ENCODE measurements at regions of chr9 and their contacts with region 1.

Region 1: GRCh38 chr9:35116898-35117551 is 1.4 kb upstream of the ATOSB start:
- DNase-seq: peak; percentile 94
- H3K4me3 Mint-ChIP-seq: peak overlapping the region; percentile 89
- H3K27ac Mint-ChIP-seq: peak overlapping the region; percentile 80
- H3K4me1 Mint-ChIP-seq: peaks cover 38% of the 10 kb centered on the region
- H3K27me3 Mint-ChIP-seq: no peaks in the 10 kb centered on the region

Region 2: GRCh38 chr9:34376596-34377403 is 740.2 kb before region 1 on chr9 and contains the start of gene MYORG:
- CTCF ChIA-PET with region 1: no interaction called
- intact Hi-C with region 1: loop called (anchors 1 kb)
- DNase-seq: peak; percentile 97
- H3K4me3 Mint-ChIP-seq: peak within 1 kb of the TSS; percentile 80
- H3K27ac Mint-ChIP-seq: no peak within 1 kb of the TSS
- H3K4me1 Mint-ChIP-seq: peaks cover 30% of the 10 kb centered on the region
- H3K27me3 Mint-ChIP-seq: no peaks in the 10 kb centered on the region
- total RNA-seq, gene MYORG: 1.1 to 2.0 TPM

Region 3: GRCh38 chr9:35161713-35162604 is 44.9 kb after region 1 on chr9 and contains the start of gene UNC13B:
- CTCF ChIA-PET with region 1: interaction called, 4 read pairs
- intact Hi-C with region 1: loop called (anchors 1 kb)
- DNase-seq: peak; percentile 83
- H3K4me3 Mint-ChIP-seq: peak within 1 kb of the TSS; percentile 88
- H3K27ac Mint-ChIP-seq: no peak within 1 kb of the TSS
- H3K4me1 Mint-ChIP-seq: peaks cover 25% of the 10 kb centered on the region
- H3K27me3 Mint-ChIP-seq: peaks cover 3% of the 10 kb centered on the region
- total RNA-seq, gene UNC13B: 5.4 to 6.4 TPM

Region 4: GRCh38 chr9:35415386-35416096 is 298.5 kb after region 1 on chr9:
- CTCF ChIA-PET with region 1: no interaction called
- intact Hi-C with region 1: loop called (anchors 2 kb)
- DNase-seq: no peak
- H3K4me3 Mint-ChIP-seq: no peak overlapping the region
- H3K27ac Mint-ChIP-seq: no peak overlapping the region
- H3K4me1 Mint-ChIP-seq: no peaks in the 10 kb centered on the region
- H3K27me3 Mint-ChIP-seq: peaks cover 9% of the 10 kb centered on the region

Region 5: DNA sequence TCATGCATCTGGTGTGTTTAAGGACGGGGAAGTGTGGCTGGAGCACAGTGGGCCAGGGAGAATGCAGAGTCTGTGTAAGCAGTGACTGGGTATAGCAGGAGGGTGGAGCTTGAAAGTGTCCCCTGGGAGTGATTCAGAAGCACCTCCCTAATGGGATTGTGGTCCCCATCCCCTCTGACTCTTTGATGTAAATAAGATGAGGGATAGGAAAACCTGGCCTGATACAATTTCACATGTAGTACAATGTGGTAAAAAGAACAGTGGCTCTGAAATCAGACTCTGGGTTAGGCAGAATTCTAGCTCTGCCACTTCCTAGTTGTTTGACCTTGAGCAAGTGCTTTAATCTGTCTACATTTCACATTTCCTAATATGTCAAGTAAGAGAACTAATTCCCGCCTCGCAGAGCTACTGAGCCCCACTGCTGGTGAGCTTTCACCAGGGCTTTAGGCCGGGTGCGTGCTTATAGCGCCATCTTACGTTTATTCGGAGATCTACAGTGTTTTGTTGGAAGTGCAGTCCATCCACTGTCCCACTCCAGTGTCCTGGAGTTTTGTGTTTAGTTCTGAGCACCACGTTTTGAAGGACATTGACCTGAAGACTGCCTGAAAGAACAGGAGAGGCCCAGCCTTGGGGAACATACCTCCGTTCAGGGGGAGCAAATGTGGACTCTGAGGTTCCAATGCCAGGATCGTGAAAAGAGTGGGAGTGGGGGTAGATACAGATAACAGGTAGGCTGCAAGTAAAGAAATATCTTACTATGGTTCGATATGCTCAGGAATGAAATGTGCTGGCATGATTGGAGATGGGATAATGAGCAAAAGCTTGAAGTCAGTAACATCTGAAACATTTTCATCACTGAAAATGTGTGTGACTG is 436.9 kb after region 1 on chr9:
- CTCF ChIA-PET with region 1: interaction called, 9 read pairs
- intact Hi-C with region 1: loop called (anchors 1 kb)
- DNase-seq: peak; percentile 71
- H3K4me3 Mint-ChIP-seq: no peak overlapping the region
- H3K27ac Mint-ChIP-seq: no peak overlapping the region
- H3K4me1 Mint-ChIP-seq: no peaks in the 10 kb centered on the region
- H3K27me3 Mint-ChIP-seq: no peaks in the 10 kb centered on the region

Region 6: GRCh38 chr9:35829084-35829763 is 712.2 kb after region 1 on chr9 and contains the start of gene TMEM8B:
- CTCF ChIA-PET with region 1: no interaction called
- intact Hi-C with region 1: loop called (anchors 5 kb)
- DNase-seq: peak; percentile 96
- H3K4me3 Mint-ChIP-seq: peak within 1 kb of the TSS; percentile 89
- H3K27ac Mint-ChIP-seq: peak within 1 kb of the TSS; percentile 59
- H3K4me1 Mint-ChIP-seq: peaks cover 24% of the 10 kb centered on the region
- H3K27me3 Mint-ChIP-seq: peaks cover 2% of the 10 kb centered on the region
- total RNA-seq, gene TMEM8B: 6.2 to 6.6 TPM

Measured in activated naive CD4-positive, alpha-beta T cell treated with anti-CD3 and anti-CD28 coated beads for 36 hours (primary cell).